CD8-positive, alpha-beta T cell (primary cell): ENCODE measurements at regions of chr17 and their contacts with region 1.

Region 1: DNA sequence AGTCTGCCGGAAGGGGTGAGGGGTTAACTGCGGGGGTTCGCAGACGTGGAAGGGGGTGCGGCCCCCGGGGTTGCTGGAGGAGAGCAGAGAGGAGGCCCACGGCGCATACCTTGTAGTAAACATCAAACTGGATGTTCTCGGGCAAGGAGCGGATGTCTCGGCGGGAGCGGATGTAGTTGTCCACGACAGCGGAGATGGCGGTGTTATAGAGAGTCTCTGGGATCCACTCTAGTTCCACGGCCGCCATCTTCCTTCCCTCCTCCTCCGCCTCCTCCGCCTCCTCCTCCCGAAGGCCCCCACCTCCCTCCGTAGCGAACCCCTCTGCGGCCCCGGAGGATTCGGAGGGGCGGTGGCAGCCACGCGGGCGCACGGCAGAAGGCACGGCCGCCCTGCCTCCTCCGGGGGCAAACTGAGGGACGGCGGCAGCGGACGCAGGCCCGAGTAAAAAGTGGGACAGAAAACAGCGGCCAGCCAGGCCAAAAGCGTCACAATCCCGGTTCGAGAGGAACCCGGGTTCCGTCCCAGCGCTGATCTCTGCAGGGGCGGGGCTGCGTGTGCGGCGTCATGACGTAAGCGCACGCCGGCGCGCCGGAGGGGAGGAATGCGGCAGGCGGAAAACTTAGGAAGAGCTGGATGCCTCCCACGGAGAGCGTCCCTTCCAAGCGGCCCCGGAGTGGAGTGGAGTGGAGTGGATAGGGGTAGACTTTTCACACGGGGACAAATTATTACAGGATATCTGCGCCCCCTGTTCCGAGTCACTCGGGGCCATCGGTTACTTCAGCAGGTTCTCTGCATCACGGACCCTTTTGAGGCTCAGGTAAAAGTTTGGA is at the start of gene APPBP2:
- DNase-seq: peak; percentile 37 to 89 (median 73)
- ATAC-seq: peak; percentile 86
- H3K4me3 ChIP-seq: peak within 1 kb of the TSS; percentile 85 to 86
- H3K4me3 Mint-ChIP-seq: peak within 1 kb of the TSS; percentile 99
- H3K27ac ChIP-seq: peak within 1 kb of the TSS; percentile 95 to 96
- H3K27ac Mint-ChIP-seq: peak within 1 kb of the TSS; percentile 98
- H3K4me1 ChIP-seq: peaks cover 29% of the 10 kb centered on the region
- H3K4me1 Mint-ChIP-seq: peaks cover 53% of the 10 kb centered on the region
- H3K27me3 ChIP-seq: no peaks in the 10 kb centered on the region
- H3K27me3 Mint-ChIP-seq: no peaks in the 10 kb centered on the region
- CTCF ChIP-seq: no peak
- total RNA-seq, gene APPBP2: 19.9 to 20.1 TPM

Region 2: DNA sequence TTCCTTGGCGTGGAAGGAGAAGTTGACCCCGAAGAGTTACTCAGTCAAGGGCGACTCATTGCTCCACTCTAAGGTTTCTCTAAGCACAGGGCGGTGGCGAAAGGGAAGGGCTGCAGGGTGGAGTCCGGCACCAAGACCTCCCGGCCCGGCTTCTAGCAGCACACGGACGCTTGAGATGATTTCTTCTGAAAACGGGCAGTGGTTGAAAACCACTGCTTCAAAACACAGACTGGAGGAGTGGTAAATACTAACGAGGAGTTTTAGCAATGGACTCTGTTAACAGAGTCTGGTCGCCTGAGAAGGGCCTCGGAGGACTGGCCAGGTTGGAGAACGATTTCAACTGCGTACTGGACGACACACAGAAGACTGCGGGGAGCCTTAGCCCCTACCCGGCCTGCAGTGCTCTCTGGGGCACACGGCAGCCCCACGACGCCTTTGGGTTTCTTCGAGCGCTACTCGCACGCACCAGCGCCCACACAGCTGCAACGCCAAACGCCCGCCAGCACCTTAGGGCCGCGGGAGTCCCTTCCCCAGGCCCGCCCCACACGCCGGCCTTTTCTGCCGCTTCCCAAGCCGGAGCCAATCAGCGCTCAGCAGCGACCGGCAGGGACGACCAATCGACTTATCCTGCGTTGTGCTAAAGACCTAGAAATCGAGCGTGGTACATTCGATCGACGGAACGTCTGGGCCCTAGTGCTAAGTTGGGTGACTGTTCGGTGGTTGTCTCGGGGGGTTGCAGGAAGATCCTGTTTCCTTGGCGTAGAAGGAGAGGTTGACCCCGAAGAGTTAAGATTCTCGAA is 390.5 kb before region 1 on chr17:
- CTCF ChIA-PET with region 1: no interaction called
- POLR2A ChIA-PET with region 1: no interaction called
- intact Hi-C with region 1: loop called in 1 of 2 experiments (anchors 10 kb)
- DNase-seq: peak; percentile 26 to 83 (median 70)
- ATAC-seq: peak; percentile 79
- H3K4me3 ChIP-seq: peak overlapping the region; percentile 66 to 70
- H3K4me3 Mint-ChIP-seq: peak overlapping the region; percentile 93
- H3K27ac ChIP-seq: no peak overlapping the region
- H3K27ac Mint-ChIP-seq: peak overlapping the region; percentile 49
- H3K4me1 ChIP-seq: peaks cover 25% of the 10 kb centered on the region
- H3K4me1 Mint-ChIP-seq: peaks cover 26% of the 10 kb centered on the region
- H3K27me3 ChIP-seq: peaks cover 14 to 16% of the 10 kb centered on the region in 2 experiments
- H3K27me3 Mint-ChIP-seq: peaks cover 27% of the 10 kb centered on the region
- CTCF ChIP-seq: no peak

Region 3: DNA sequence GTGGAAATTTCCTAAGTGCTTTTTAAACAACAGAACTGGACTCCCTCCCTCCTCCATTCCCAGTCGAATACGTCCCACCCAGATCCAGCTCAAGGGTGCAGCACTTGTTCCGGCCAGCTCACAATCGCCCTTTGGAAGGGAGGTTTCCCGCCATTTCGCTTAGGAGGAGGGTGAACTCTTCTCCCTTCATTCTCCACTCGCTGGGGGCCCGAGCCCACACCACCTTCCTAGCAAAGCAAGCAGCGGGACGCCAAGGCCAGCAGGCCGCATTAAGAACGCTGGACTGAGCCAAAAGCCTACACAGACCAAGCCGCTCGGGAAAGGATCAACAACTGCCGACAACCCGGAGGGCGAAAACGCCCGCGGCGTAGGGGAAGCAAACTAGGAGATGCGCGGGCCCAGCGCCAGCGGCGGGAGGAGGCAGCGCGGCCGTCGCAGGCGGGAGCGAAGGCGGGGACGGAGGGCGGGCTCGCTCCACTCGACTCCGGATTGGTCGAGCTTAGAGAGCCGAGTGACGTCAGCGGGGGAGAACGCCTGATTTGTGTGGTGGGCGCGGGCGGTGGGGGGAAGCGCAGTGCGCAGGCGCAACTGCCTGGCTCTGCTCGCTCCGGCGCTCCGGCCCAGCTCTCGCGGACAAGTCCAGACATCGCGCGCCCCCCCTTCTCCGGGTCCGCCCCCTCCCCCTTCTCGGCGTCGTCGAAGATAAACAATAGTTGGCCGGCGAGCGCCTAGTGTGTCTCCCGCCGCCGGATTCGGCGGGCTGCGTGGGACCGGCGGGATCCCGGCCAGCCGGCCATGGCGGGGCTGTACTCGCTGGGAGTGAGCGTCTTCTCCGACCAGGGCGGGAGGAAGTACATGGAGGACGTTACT is 74.0 kb after region 1 on chr17 and contains the start of gene PPM1D:
- CTCF ChIA-PET with region 1: no interaction called
- POLR2A ChIA-PET with region 1: no interaction called
- intact Hi-C with region 1: loop called (anchors 1 to 2 kb)
- DNase-seq: peak; percentile 92 to 99 (median 98)
- ATAC-seq: peak; percentile 93
- H3K4me3 ChIP-seq: peak within 1 kb of the TSS; percentile 84 to 97
- H3K4me3 Mint-ChIP-seq: peak within 1 kb of the TSS; percentile 94
- H3K27ac ChIP-seq: peak within 1 kb of the TSS; percentile 76 to 96
- H3K27ac Mint-ChIP-seq: peak within 1 kb of the TSS; percentile 94
- H3K4me1 ChIP-seq: peaks cover 11% of the 10 kb centered on the region
- H3K4me1 Mint-ChIP-seq: peaks cover 38% of the 10 kb centered on the region
- H3K27me3 ChIP-seq: no peaks in the 10 kb centered on the region
- H3K27me3 Mint-ChIP-seq: no peaks in the 10 kb centered on the region
- CTCF ChIP-seq: no peak
- total RNA-seq, gene PPM1D: 21.0 to 21.1 TPM